ENCODE measurements at regions of chr7 and their contacts with region 1.

Region 1: GRCh38 chr7:7640221-7641128 is at the start of gene UMAD1:
- DNase-seq: peak; percentile 94 to 100 (median 98)
- ATAC-seq: peak; percentile 83
- H3K4me3 ChIP-seq: peak within 1 kb of the TSS; percentile 88
- H3K4me3 Mint-ChIP-seq: peak within 1 kb of the TSS; percentile 90
- H3K27ac ChIP-seq: peak within 1 kb of the TSS; percentile 98 to 99
- H3K27ac Mint-ChIP-seq: peak within 1 kb of the TSS; percentile 98
- H3K4me1 ChIP-seq: peaks cover 17% of the 10 kb centered on the region
- H3K4me1 Mint-ChIP-seq: peaks cover 59% of the 10 kb centered on the region
- H3K27me3 ChIP-seq: no peaks in the 10 kb centered on the region
- H3K27me3 Mint-ChIP-seq: no peaks in the 10 kb centered on the region
- CTCF ChIP-seq: no peak
- total RNA-seq, gene UMAD1: 11.0 to 15.3 TPM

Region 2: DNA sequence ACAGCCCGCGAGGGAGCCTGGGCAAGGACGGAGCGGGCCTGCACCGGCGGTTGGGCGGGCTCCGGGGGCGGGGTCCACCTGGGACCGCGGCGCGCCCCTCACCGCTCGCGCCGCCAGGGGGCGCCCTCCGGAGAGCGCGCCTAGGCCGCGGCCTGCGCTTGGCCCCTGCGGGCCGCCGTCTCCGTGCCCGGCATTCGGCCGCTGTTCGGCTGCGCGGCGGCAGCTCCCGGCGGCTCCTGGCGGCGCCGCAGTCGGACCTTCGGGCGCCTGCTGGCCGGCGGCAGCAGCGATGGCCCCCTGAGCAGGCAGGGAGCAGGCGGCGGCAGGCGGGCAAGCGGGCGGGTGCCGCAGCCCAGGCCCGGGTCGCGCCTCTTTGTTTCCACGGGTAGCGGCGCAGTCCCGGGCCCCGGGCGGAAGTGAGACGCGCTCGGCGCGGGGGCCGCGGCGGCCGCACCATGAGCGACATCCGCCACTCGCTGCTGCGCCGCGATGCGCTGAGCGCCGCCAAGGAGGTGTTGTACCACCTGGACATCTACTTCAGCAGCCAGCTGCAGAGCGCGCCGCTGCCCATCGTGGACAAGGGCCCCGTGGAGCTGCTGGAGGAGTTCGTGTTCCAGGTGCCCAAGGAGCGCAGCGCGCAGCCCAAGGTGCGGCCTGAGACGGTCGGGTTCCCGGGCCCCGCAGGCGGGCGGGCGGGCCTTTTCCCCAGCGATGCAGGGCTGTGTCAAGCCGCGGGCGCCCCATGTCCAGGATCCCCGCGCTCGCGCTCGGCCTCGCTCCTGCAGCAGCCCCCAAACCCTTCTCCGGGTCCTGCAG is 1050.4 kb before region 1 on chr7 and contains the start of gene INTS15:
- CTCF ChIA-PET with region 1: no interaction called
- POLR2A ChIA-PET with region 1: no interaction called
- intact Hi-C with region 1: loop called in 1 of 2 experiments (anchors 5 kb)
- DNase-seq: peak; percentile 65 to 95 (median 78)
- ATAC-seq: peak; percentile 89
- H3K4me3 ChIP-seq: peak within 1 kb of the TSS; percentile 73
- H3K4me3 Mint-ChIP-seq: peak within 1 kb of the TSS; percentile 98
- H3K27ac ChIP-seq: peak within 1 kb of the TSS; percentile 55 to 59
- H3K27ac Mint-ChIP-seq: peak within 1 kb of the TSS; percentile 96
- H3K4me1 ChIP-seq: peaks cover 28% of the 10 kb centered on the region
- H3K4me1 Mint-ChIP-seq: peaks cover 12% of the 10 kb centered on the region
- H3K27me3 ChIP-seq: no peaks in the 10 kb centered on the region
- H3K27me3 Mint-ChIP-seq: no peaks in the 10 kb centered on the region
- CTCF ChIP-seq: peak; percentile 45
- total RNA-seq, gene INTS15: 39.3 to 41.8 TPM

Region 3: GRCh38 chr7:7173956-7174632 is 466.4 kb before region 1 on chr7:
- CTCF ChIA-PET with region 1: no interaction called
- POLR2A ChIA-PET with region 1: no interaction called
- intact Hi-C with region 1: no loop called
- DNase-seq: no peak
- ATAC-seq: no peak
- H3K4me3 ChIP-seq: no peak overlapping the region
- H3K4me3 Mint-ChIP-seq: no peak overlapping the region
- H3K27ac ChIP-seq: no peak overlapping the region
- H3K27ac Mint-ChIP-seq: no peak overlapping the region
- H3K4me1 ChIP-seq: no peaks in the 10 kb centered on the region
- H3K4me1 Mint-ChIP-seq: peaks cover 38% of the 10 kb centered on the region
- H3K27me3 ChIP-seq: no peaks in the 10 kb centered on the region
- H3K27me3 Mint-ChIP-seq: no peaks in the 10 kb centered on the region
- CTCF ChIP-seq: no peak

Region 4: GRCh38 chr7:7566651-7567611 is 73.5 kb before region 1 on chr7 and contains the start of gene MIOS:
- CTCF ChIA-PET with region 1: no interaction called
- POLR2A ChIA-PET with region 1: interaction called, 36 read pairs
- intact Hi-C with region 1: loop called (anchors 2 to 5 kb)
- DNase-seq: peak; percentile 65 to 92 (median 77)
- ATAC-seq: peak; percentile 92
- H3K4me3 ChIP-seq: peak within 1 kb of the TSS; percentile 74
- H3K4me3 Mint-ChIP-seq: peak within 1 kb of the TSS; percentile 89
- H3K27ac ChIP-seq: peak within 1 kb of the TSS; percentile 71 to 75
- H3K27ac Mint-ChIP-seq: peak within 1 kb of the TSS; percentile 87
- H3K4me1 ChIP-seq: peaks cover 29% of the 10 kb centered on the region
- H3K4me1 Mint-ChIP-seq: peaks cover 38% of the 10 kb centered on the region
- H3K27me3 ChIP-seq: no peaks in the 10 kb centered on the region
- H3K27me3 Mint-ChIP-seq: no peaks in the 10 kb centered on the region
- CTCF ChIP-seq: no peak
- total RNA-seq, gene MIOS: 30.8 to 33.3 TPM

Region 5: DNA sequence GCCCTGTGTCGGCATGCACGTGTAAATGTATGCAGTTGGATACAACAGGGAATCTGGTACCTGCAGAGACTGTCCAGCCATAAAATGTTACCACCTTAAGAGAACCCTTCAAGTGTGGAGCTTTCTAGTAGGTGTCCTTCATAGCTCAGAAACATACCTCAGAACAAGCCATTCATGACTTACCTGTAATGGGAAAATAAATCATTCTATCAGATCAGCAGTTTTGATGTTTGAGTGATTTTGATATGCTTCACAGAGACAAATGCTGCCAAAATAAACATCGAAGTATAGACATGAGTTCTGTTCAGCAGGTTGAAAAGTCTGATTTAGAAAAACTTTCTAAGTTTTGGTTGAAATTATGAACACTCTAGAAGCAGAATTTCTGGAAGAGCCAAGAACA is 33.5 kb before region 1 on chr7:
- CTCF ChIA-PET with region 1: no interaction called
- POLR2A ChIA-PET with region 1: no interaction called
- intact Hi-C with region 1: no loop called
- DNase-seq: no peak
- ATAC-seq: no peak
- H3K4me3 ChIP-seq: no peak overlapping the region
- H3K4me3 Mint-ChIP-seq: no peak overlapping the region
- H3K27ac ChIP-seq: no peak overlapping the region
- H3K27ac Mint-ChIP-seq: no peak overlapping the region
- H3K4me1 ChIP-seq: no peaks in the 10 kb centered on the region
- H3K4me1 Mint-ChIP-seq: no peaks in the 10 kb centered on the region
- H3K27me3 ChIP-seq: no peaks in the 10 kb centered on the region
- H3K27me3 Mint-ChIP-seq: no peaks in the 10 kb centered on the region
- CTCF ChIP-seq: no peak

Region 6: GRCh38 chr7:7668706-7669105 is 28.2 kb after region 1 on chr7:
- CTCF ChIA-PET with region 1: no interaction called
- POLR2A ChIA-PET with region 1: interaction called, 16 read pairs
- intact Hi-C with region 1: no loop called
- DNase-seq: no peak
- ATAC-seq: no peak
- H3K4me3 ChIP-seq: no peak overlapping the region
- H3K4me3 Mint-ChIP-seq: no peak overlapping the region
- H3K27ac ChIP-seq: no peak overlapping the region
- H3K27ac Mint-ChIP-seq: peak overlapping the region; percentile 85
- H3K4me1 ChIP-seq: no peaks in the 10 kb centered on the region
- H3K4me1 Mint-ChIP-seq: peaks cover 60% of the 10 kb centered on the region
- H3K27me3 ChIP-seq: no peaks in the 10 kb centered on the region
- H3K27me3 Mint-ChIP-seq: no peaks in the 10 kb centered on the region
- CTCF ChIP-seq: no peak

Measured in CD4-positive, alpha-beta T cell (primary cell).